ENCODE measurements at regions of chr13 and their contacts with region 1.

Region 1: DNA sequence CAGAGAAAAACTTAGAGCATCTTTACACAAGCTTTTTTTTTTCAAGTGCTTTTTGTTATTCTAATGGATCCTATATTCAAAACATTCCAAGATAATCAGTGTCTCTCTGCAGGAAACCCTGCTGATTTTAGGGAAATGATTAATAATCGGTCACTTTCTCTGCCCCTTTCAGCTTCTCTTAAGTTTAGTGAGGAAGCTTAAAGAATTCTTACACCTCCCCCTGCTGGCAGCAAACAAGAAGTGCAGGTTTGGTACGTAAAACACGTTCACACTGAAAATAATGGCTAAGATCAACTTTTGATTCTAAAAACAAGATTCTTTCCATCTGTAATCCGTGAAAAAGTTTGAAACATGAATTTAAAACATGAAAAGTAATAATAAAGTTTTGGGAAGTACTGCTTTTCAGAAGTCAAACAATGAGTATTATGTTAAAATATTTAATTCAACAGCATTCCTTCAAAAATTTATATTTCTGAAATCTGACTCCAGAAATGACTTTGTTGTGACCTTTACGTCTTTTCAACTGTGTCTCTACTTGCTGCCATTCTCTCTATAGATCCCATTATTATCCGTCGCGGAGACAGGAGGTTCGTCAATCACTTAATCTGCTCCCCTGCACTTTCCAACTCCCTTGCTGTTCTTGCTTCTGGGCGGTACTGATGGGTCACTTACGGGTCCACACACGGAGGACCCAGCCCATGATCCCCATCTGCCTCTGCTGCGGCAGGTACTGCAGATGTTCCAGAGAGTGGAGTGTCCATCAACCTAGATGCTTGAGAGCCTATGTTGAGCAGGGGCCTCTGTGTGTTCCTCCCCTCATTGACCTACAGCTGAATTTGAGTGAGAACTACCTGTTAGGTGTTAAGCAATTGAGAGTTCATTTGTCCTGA is 203.1 kb upstream of the EDNRB start:
- DNase-seq: peak; percentile 43
- ATAC-seq: peak; percentile 71

Region 2: DNA sequence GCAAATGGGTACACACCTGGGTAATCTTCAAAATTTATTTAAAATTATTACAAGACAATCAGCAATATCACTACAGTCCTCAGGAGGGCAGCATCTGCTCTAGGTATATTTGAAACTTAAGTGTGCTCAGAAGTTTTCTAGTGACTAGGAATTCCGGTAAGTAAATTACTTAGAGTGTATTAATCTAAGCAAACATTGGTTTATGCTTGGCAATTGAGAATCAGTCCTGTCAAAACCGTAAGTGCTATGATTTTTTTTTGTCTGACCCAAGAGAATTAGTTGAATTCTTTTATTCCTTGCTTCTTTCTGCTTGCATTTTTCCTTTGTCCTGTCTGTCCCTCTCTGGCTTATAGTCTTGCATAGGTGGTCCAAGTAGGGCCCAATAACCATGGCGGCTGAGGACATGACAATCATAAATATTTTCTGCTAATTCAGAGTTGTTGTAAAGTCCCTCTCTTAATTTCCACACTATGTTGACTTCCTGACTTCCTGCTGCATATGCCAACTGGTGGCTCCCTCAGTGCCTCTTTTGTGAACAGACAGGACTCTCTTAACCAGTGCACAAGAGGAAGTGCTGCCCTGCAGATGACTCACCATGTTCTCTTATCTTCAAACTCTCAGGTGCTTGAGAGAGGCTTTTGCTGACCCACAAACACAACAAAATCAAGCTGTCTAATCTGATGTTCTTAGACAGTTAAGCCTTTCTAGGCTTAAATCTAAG is 342.0 kb before region 1 on chr13:
- intact Hi-C with region 1: loop called (anchors 2 kb)
- DNase-seq: no peak
- ATAC-seq: peak; percentile 81

Region 3: DNA sequence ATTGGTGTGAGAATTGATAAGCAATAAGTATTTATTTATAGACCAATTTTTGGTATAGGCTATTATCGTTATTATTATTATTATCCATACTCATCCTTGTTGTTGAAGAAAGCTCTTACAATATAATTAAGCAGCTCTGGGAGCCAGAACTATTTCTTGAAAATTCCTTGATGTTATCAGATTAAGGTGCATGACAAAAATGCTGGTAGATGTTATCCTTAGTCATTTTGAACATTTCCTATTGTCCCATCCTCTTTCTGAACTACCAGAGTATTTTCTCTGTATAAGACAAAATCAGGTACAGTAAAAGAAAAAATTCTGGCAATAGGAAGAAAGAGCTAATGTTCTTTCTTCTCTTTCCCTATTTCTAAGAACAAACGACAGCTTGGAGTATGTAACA is 151.4 kb after region 1 on chr13:
- intact Hi-C with region 1: no loop called
- DNase-seq: no peak
- ATAC-seq: no peak

Measured in Right ventricle myocardium superior (tissue), 1 donor.